K562 (cell line): ENCODE measurements at regions of chrX and their contacts with region 1.

Region 1: DNA sequence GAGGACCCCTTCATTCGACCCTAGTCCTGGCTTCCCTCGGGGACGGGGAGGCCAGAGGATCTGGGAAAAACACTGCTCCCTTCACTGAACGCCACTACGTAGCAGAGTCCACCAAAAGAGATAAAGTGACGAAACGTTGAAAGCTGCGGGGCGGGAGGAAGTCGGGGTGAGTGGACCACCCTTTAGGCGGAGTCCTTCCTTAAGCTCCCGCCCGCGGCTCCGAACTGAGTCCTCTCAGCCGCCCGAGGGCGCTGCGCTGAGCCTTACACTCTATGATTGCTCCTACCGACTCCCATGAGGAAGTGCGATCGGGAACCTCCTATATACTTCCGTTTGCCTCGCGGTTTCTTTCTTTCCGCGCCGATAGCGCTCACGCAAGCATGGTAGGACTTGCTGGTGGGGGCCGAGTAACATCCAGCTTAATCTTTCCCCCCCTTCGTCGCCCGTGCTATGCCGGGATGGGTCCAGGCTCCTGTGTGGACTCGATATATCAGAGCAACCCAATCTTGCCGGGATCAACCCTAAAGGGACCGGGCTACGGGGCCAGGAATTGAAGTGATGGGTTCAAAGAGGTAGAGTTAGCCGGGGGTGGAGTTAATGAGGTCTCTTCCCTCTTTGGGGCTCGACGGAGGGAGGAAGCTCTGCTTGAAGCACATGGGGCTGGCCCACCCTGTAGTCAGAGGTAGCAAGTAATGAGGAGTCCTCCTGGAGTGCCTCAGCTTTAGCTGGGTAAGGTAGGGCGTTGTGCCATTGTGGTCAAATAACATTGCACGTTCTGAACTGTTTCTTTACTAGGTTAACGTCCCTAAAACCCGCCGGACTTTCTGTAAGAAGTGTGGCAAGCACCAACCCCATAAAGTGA is at the start of gene RPL36A:
- DNase-seq: peak; percentile 77 to 96 (median 84)
- ATAC-seq: peak; percentile 87
- H3K4me3 ChIP-seq: peak within 1 kb of the TSS; percentile 91
- H3K27ac ChIP-seq: peak within 1 kb of the TSS; percentile 95
- H3K4me1 ChIP-seq: peaks cover 4 to 23% of the 10 kb centered on the region in 2 experiments
- H3K27me3 ChIP-seq: no peaks in the 10 kb centered on the region
- CTCF ChIP-seq: peak; percentile 79 to 82 (median 80)
- EP300 ChIP-seq: peak; percentile 14
- POLR2A ChIP-seq: peak; percentile 99
- RAD21 ChIP-seq: no peak; a peak in 1 of 4 replicates
- polyA plus RNA-seq, gene RPL36A: 2,383 to 2,855 TPM

Region 2: DNA sequence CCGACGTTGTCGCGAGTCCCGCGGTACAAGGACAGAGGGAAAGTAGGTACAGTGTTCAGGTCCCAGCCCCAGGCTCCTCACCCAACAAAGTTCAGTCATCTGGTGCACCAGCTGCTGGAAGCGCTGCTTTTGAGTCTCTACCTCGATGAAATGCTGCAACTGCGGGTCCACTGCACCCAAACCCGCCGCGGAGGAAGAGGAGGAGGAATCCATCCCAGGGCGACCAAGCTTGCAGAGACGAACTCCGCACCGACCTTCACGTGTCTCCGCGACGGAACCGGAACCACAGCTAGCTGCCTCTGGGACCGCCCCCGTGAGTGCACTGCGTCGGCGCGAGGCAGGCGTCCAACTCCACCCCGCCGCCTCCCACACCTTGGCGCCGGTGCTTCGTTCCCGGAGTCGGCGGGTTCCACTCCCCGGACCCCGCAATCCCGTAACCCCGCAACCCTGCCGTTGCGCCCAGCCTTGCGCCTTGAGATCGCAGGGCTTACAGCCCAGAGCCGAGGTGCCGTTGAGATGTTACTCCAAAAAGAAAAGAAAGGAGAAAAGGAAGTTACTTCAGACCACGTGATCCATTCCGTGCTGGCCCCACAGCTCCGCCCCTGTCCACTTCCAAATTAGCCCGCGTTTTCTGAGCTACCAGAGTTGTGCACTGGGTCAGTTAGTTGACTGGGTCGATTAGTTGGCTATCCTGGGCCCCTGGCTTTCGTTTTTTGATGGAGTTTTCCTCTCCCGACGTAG is 42.3 kb before region 1 on chrX and contains the start of gene TIMM8A:
- CTCF ChIA-PET with region 1: no interaction called
- POLR2A ChIA-PET with region 1: interaction called, 21 read pairs
- in situ Hi-C with region 1: no loop called
- intact Hi-C with region 1: loop called (anchors 2 kb)
- DNase-seq: peak; percentile 79 to 91 (median 83)
- ATAC-seq: peak; percentile 97
- H3K4me3 ChIP-seq: peak within 1 kb of the TSS; percentile 64
- H3K27ac ChIP-seq: peak within 1 kb of the TSS; percentile 94
- H3K4me1 ChIP-seq: peaks cover 0 to 6% of the 10 kb centered on the region in 2 experiments; a peak in 4 of 5 replicates
- H3K27me3 ChIP-seq: no peaks in the 10 kb centered on the region
- CTCF ChIP-seq: 0 out of 6 replicates have a peak, but pooled peaks of 1 of the 3 experiments have one; percentile 10
- EP300 ChIP-seq: no peak
- POLR2A ChIP-seq: peak; percentile 90
- RAD21 ChIP-seq: no peak
- polyA plus RNA-seq, gene TIMM8A: 132 TPM

Region 3: GRCh38 chrX:101368256-101368655 is 22.6 kb before region 1 on chrX:
- CTCF ChIA-PET with region 1: no interaction called
- POLR2A ChIA-PET with region 1: interaction called, 16 read pairs
- in situ Hi-C with region 1: no loop called
- intact Hi-C with region 1: no loop called
- DNase-seq: no peak
- ATAC-seq: no peak
- H3K4me3 ChIP-seq: no peak overlapping the region
- H3K27ac ChIP-seq: no peak overlapping the region
- H3K4me1 ChIP-seq: no peaks in the 10 kb centered on the region
- H3K27me3 ChIP-seq: no peaks in the 10 kb centered on the region
- CTCF ChIP-seq: no peak
- EP300 ChIP-seq: no peak
- POLR2A ChIP-seq: no peak
- RAD21 ChIP-seq: no peak

Region 4: DNA sequence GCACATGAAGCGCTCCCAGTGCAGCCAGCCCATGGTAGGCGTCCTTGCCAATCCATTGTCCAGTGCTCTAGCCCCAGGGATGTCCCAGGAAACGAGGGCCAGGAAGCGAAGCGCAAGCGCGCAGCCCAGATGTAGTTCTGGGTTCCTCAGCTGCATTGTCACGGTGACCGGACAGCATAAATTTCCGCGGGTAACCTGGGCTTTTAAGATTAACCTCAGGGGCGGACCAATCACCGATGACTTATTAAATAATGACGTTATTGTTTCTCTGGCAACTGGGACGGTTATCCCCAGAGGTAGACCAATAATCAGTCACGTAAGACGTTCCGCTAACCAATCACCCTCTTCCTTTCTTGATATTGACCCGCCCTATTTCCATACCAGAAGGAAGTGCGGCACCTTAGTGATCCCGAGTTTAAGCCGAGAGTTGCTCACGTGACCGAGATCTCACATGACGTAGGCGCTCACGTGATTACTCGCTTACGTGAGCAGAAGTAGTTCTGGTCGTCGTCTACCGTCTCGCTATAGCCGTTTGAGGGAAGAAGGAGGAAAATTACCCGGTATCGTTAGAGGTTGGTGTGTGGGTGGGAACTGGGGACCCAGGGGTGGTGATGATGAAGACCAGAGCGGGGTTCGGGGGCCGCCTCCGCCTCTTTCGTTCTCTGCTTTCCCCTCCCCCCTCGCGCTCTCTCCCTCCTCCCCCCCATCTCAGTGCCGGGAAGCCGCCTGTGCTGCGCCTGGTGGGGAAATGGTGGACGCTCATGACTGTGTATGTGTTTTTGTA is 17.0 kb after region 1 on chrX and contains the starts of genes GLA and HNRNPH2:
- CTCF ChIA-PET with region 1: no interaction called
- POLR2A ChIA-PET with region 1: interaction called, 24 read pairs
- in situ Hi-C with region 1: no loop called
- intact Hi-C with region 1: loop called (anchors 2 kb)
- DNase-seq: peak; percentile 88 to 96 (median 92)
- ATAC-seq: peak; percentile 93
- H3K4me3 ChIP-seq: peak within 1 kb of the TSS; percentile 71
- H3K27ac ChIP-seq: peak within 1 kb of the TSS; percentile 97
- H3K4me1 ChIP-seq: no peaks in the 10 kb centered on the region; a peak in 1 of 5 replicates
- H3K27me3 ChIP-seq: no peaks in the 10 kb centered on the region
- CTCF ChIP-seq: peak in 1 of 3 experiments; percentile 23; a peak in 1 of 6 replicates
- EP300 ChIP-seq: peak; percentile 37; the same call in 1 of the 2 replicates
- POLR2A ChIP-seq: peak; percentile 82
- RAD21 ChIP-seq: no peak
- polyA plus RNA-seq, gene GLA: 137 to 146 TPM
- polyA plus RNA-seq, gene HNRNPH2: 60.3 to 130 TPM